Activated CD4-positive, alpha-beta memory T cell treated with anti-CD3 and anti-CD28 coated beads for 36 hours (primary cell): ENCODE measurements at regions of chr10 and their contacts with region 1.

Region 1: DNA sequence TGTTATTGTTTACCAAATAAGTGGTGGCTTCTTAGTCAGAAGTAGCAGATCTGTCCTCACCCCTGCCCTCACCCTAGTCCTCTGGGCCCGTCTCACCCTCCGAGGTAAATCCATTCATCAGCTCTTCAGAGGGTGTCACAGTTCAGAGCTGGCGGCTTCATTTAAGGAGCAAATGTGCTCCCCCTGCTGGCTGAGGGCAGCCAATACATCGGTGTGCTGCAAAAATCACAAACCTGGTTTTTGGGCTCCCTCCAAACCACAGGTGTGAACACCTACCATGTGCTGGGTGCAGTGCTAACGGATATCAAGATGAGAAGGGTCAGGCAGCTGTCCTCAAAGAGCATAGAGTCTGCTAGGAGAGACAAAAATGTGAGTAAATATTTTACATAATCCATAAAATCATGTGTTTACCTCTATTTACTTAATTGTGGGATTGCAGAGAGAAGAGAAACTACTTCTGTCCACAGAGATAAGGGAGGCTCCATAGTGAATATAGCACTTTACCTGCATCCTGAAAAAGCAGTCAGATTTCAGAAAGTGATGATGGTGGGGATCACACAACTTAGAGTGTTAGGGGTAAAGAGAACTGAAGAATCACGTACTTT is 15.5 kb upstream of the CRTAC1 start:
- DNase-seq: peak; percentile 73
- H3K4me3 Mint-ChIP-seq: no peak overlapping the region
- H3K27ac Mint-ChIP-seq: no peak overlapping the region
- H3K4me1 Mint-ChIP-seq: peaks cover 3% of the 10 kb centered on the region
- H3K27me3 Mint-ChIP-seq: peaks cover 23% of the 10 kb centered on the region

Region 2: DNA sequence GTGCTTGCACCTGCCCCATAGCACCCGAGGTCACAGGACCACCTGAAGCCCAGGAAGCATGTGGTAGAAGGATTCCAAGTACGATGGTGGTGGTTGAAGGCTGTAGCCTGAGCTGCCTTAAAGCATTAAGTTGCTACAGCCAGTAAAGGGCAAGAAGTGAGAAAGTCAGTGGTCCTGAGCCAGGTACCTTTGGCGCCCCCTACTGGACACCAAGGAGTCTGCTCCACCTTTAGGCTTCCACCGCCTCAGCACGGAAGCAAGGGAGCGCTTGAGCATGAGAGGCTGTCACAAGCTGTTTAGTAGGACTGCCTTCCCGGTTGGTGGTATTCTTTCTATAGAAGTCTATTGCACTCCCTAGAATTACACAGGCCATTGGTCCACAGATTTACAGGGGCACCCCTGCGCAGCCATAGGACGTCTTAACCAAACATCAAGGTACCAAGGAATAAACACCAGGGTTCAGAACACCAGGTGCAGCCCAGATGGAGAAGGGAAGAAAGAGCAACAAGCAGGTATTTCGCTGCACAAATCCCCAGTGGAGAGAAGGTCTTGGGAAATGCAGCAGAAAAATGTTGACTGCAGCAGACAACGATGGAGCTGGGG is 17.6 kb before region 1 on chr10:
- CTCF ChIA-PET with region 1: interaction called, 42 read pairs
- POLR2A ChIA-PET with region 1: no interaction called
- intact Hi-C with region 1: no loop called
- DNase-seq: peak; percentile 74
- H3K4me3 Mint-ChIP-seq: no peak overlapping the region
- H3K27ac Mint-ChIP-seq: no peak overlapping the region
- H3K4me1 Mint-ChIP-seq: peaks cover 4% of the 10 kb centered on the region
- H3K27me3 Mint-ChIP-seq: peaks cover 50% of the 10 kb centered on the region

Region 3: DNA sequence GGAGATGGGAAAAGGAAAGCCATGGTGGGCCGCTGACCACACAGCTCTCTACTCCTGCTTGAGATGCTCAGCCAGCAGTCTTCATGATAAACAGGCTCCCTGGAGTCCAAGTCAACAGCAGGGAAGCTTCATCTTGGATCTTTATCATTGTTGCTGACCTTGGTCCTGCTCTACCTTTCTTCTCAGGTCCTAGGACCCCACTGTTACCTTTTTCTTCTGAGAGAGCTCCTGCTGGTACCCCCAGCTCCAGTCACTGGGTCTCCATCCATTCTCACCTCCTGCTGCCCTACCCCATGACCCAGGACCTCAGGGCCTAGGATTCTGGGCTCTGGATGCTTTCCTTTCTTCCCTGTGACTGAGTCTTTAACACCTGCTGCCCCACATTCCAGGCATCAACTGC is 10.3 kb before region 1 on chr10:
- CTCF ChIA-PET with region 1: interaction called, 29 read pairs
- POLR2A ChIA-PET with region 1: no interaction called
- intact Hi-C with region 1: no loop called
- DNase-seq: no peak
- H3K4me3 Mint-ChIP-seq: no peak overlapping the region
- H3K27ac Mint-ChIP-seq: no peak overlapping the region
- H3K4me1 Mint-ChIP-seq: no peaks in the 10 kb centered on the region
- H3K27me3 Mint-ChIP-seq: peaks cover 68% of the 10 kb centered on the region

Region 4: GRCh38 chr10:98150544-98150943 is 104.7 kb after region 1 on chr10:
- CTCF ChIA-PET with region 1: no interaction called
- POLR2A ChIA-PET with region 1: no interaction called
- intact Hi-C with region 1: no loop called
- DNase-seq: no peak
- H3K4me3 Mint-ChIP-seq: no peak overlapping the region
- H3K27ac Mint-ChIP-seq: no peak overlapping the region
- H3K4me1 Mint-ChIP-seq: peaks cover 30% of the 10 kb centered on the region
- H3K27me3 Mint-ChIP-seq: no peaks in the 10 kb centered on the region